Gastrocnemius medialis (tissue), 4 donors: ENCODE measurements at regions of chr2 and their contacts with region 1.

Region 1: GRCh38 chr2:60881047-60881932 is at the start of gene REL:
- DNase-seq: peak; percentile 84
- ATAC-seq: peak; percentile 91 to 92
- H3K4me3 ChIP-seq: peak within 1 kb of the TSS; percentile 69 to 99 (median 75)
- H3K27ac ChIP-seq: peak within 1 kb of the TSS; percentile 89 to 100 (median 91)
- H3K4me1 ChIP-seq: peaks cover 27 to 42% of the 10 kb centered on the region in 2 donors
- H3K27me3 ChIP-seq: no peaks in the 10 kb centered on the region
- CTCF ChIP-seq: no peak
- POLR2A ChIP-seq: peak; percentile 81 to 89
- total RNA-seq, gene REL: 4.2 to 7.6 (median 5.4) TPM

Region 2: DNA sequence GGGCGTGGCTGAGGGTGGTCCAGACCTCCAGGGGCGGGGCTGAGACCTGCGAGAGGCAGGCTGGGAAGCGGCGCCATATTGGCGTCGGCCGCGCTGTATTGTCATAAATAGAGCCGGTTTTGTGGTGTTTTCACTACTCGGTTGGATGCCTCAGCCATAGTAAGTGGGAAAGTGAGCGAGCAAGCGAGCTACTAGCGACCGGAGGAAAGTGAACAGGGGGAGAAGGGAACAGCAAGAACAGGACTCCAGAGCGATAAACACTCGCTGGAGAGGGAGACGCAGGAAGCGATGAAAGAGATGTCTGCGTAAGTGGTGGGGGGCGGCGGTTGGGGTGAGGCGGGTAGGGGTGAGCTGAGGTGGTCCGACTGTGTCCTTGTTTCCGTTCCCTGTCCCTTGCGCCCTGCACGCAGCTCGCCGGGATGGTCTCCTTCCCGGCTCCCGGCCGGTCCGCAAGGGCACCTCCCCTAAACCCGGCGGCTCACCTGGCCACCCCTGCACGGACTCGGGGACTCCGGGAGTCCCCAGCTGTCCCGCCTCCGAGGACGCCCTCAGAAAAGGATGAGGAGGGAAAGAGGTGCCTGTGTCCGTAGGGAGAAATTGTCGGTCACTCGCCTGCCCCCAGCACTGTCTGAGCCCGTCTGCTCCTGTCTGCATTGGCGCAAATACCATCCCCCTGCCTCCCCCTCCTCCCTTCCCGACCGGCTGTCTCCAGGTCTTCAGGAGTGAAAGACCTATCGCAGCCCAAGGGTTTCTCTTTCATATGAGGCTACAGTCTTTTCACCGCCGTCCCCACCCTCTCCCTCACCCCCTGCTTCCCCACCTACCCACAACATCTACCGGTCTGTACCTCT is 124.9 kb before region 1 on chr2 and contains the start of gene PAPOLG:
- in situ Hi-C with region 1: no loop called
- intact Hi-C with region 1: loop called (anchors 1 kb)
- DNase-seq: peak; percentile 92
- ATAC-seq: peak; percentile 96 to 97
- H3K4me3 ChIP-seq: peak within 1 kb of the TSS; percentile 75 to 100 (median 84)
- H3K27ac ChIP-seq: peak within 1 kb of the TSS; percentile 91 to 99 (median 94)
- H3K4me1 ChIP-seq: peaks cover 10 to 14% of the 10 kb centered on the region in 2 donors
- H3K27me3 ChIP-seq: no peaks in the 10 kb centered on the region
- CTCF ChIP-seq: no peak
- POLR2A ChIP-seq: peak; percentile 61 to 73
- total RNA-seq, gene PAPOLG: 8.4 to 13.6 (median 9.6) TPM

Region 3: GRCh38 chr2:60818272-60818671 is 63.0 kb before region 1 on chr2:
- in situ Hi-C with region 1: no loop called
- intact Hi-C with region 1: no loop called
- DNase-seq: no peak
- ATAC-seq: no peak
- H3K4me3 ChIP-seq: no peak overlapping the region
- H3K27ac ChIP-seq: no peak overlapping the region
- H3K4me1 ChIP-seq: no peaks in the 10 kb centered on the region
- H3K27me3 ChIP-seq: no peaks in the 10 kb centered on the region
- CTCF ChIP-seq: no peak
- POLR2A ChIP-seq: no peak

Region 4: GRCh38 chr2:60926737-60927552 is 45.7 kb after region 1 on chr2:
- in situ Hi-C with region 1: no loop called
- intact Hi-C with region 1: no loop called
- DNase-seq: no peak
- ATAC-seq: no peak
- H3K4me3 ChIP-seq: no peak overlapping the region
- H3K27ac ChIP-seq: no peak overlapping the region
- H3K4me1 ChIP-seq: no peaks in the 10 kb centered on the region
- H3K27me3 ChIP-seq: no peaks in the 10 kb centered on the region
- CTCF ChIP-seq: no peak
- POLR2A ChIP-seq: no peak

Region 5: GRCh38 chr2:61016808-61017555 is 135.7 kb after region 1 on chr2:
- in situ Hi-C with region 1: no loop called
- intact Hi-C with region 1: loop called (anchors 2 kb)
- DNase-seq: peak; percentile 70
- ATAC-seq: peak; percentile 90 to 93
- H3K4me3 ChIP-seq: peak overlapping the region; percentile 85 to 94 (median 90)
- H3K27ac ChIP-seq: peak overlapping the region; percentile 94 to 96 (median 95)
- H3K4me1 ChIP-seq: peaks cover 35 to 38% of the 10 kb centered on the region in 2 donors
- H3K27me3 ChIP-seq: no peaks in the 10 kb centered on the region
- CTCF ChIP-seq: no peak
- POLR2A ChIP-seq: peak in 1 of 2 donors; percentile 82